CD8-positive, alpha-beta T cell (primary cell): ENCODE measurements at regions of chr12 and their contacts with region 1.

Region 1: GRCh38 chr12:95217377-95218149 is at the starts of genes FGD6 and VEZT:
- DNase-seq: peak; percentile 93 to 99 (median 98)
- ATAC-seq: peak; percentile 91
- H3K4me3 ChIP-seq: peak within 1 kb of the TSS; percentile 96
- H3K4me3 Mint-ChIP-seq: peak within 1 kb of the TSS; percentile 96
- H3K27ac ChIP-seq: peak within 1 kb of the TSS; percentile 90 to 95
- H3K27ac Mint-ChIP-seq: peak within 1 kb of the TSS; percentile 97
- H3K4me1 ChIP-seq: peaks cover 17% of the 10 kb centered on the region
- H3K4me1 Mint-ChIP-seq: peaks cover 37% of the 10 kb centered on the region
- H3K27me3 ChIP-seq: no peaks in the 10 kb centered on the region
- H3K27me3 Mint-ChIP-seq: peaks cover 5% of the 10 kb centered on the region
- CTCF ChIP-seq: peak; percentile 41
- total RNA-seq, gene FGD6: 0.94 to 1.6 TPM
- total RNA-seq, gene VEZT: 48.4 to 57.7 TPM

Region 2: DNA sequence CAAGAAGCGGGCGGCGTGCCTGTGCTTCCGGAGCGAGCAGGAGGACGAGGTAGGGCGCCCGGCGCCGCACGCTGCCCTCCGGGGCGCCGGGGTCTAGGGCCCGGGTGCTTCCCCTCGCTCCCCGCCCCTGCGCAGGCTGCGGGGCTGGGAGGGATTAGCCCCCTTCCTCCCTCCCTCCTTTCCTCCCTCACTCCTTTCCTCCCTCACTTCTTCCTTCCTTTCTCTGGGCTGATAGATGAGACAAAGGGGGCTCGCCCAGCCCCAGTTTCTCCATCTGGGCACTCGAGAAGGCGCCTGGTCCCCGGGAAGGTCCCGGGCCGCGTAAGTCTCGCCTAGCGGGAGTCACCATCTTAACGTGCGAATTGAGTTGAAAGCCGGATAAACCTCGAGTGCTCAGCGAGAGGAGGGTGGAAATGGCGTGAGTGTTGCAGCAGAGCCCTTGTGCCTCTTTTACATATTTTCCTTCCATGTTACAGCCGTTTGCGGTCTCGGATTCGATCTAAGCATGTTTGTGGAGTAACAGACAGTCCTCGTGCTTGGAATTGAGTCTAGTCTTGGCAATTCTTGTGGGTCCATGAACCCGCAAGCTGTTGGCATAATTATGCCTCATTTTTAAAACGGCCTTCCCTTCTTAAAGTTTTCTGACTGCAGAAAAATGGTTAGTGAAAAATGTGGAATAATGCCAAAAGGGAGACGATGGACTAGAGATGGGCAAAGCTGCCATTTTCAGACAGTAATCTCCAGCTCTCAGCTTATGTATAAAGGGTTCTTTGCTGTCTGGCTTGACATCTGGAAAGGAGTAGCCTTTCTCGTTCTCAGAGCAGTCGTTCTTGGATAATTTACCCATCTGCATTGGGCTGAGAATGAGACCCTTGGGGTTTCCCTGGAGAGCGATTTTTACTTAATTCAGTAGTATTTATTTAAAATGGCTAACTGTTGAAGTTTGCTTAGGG is 1838.9 kb before region 1 on chr12:
- CTCF ChIA-PET with region 1: no interaction called
- POLR2A ChIA-PET with region 1: no interaction called
- intact Hi-C with region 1: loop called in 1 of 2 experiments (anchors 2 kb)
- DNase-seq: peak; percentile 18 to 85 (median 57)
- ATAC-seq: peak; percentile 54
- H3K4me3 ChIP-seq: peak overlapping the region; percentile 72 to 87
- H3K4me3 Mint-ChIP-seq: peak overlapping the region; percentile 99
- H3K27ac ChIP-seq: peak overlapping the region; percentile 77 to 81
- H3K27ac Mint-ChIP-seq: peak overlapping the region; percentile 99
- H3K4me1 ChIP-seq: peaks cover 23% of the 10 kb centered on the region
- H3K4me1 Mint-ChIP-seq: peaks cover 44% of the 10 kb centered on the region
- H3K27me3 ChIP-seq: no peaks in the 10 kb centered on the region
- H3K27me3 Mint-ChIP-seq: no peaks in the 10 kb centered on the region
- CTCF ChIP-seq: no peak

Region 3: GRCh38 chr12:94532490-94533422 is 684.8 kb before region 1 on chr12:
- CTCF ChIA-PET with region 1: no interaction called
- POLR2A ChIA-PET with region 1: no interaction called
- intact Hi-C with region 1: loop called in 1 of 2 experiments (anchors 5 kb)
- DNase-seq: peak; percentile 47 to 79 (median 70)
- ATAC-seq: peak; percentile 79
- H3K4me3 ChIP-seq: no peak overlapping the region
- H3K4me3 Mint-ChIP-seq: no peak overlapping the region
- H3K27ac ChIP-seq: no peak overlapping the region
- H3K27ac Mint-ChIP-seq: no peak overlapping the region
- H3K4me1 ChIP-seq: no peaks in the 10 kb centered on the region
- H3K4me1 Mint-ChIP-seq: no peaks in the 10 kb centered on the region
- H3K27me3 ChIP-seq: no peaks in the 10 kb centered on the region
- H3K27me3 Mint-ChIP-seq: peaks cover 10% of the 10 kb centered on the region
- CTCF ChIP-seq: peak; percentile 75

Region 4: GRCh38 chr12:95117178-95117599 is 100.4 kb before region 1 on chr12:
- CTCF ChIA-PET with region 1: interaction called, 4 read pairs
- POLR2A ChIA-PET with region 1: no interaction called
- intact Hi-C with region 1: loop called (anchors 1 kb)
- DNase-seq: peak; percentile 21 to 78 (median 67)
- ATAC-seq: peak; percentile 83
- H3K4me3 ChIP-seq: no peak overlapping the region
- H3K4me3 Mint-ChIP-seq: no peak overlapping the region
- H3K27ac ChIP-seq: no peak overlapping the region
- H3K27ac Mint-ChIP-seq: no peak overlapping the region
- H3K4me1 ChIP-seq: no peaks in the 10 kb centered on the region
- H3K4me1 Mint-ChIP-seq: no peaks in the 10 kb centered on the region
- H3K27me3 ChIP-seq: no peaks in the 10 kb centered on the region
- H3K27me3 Mint-ChIP-seq: no peaks in the 10 kb centered on the region
- CTCF ChIP-seq: peak; percentile 75

Region 5: GRCh38 chr12:95858479-95859343 is 641.1 kb after region 1 on chr12 and contains the start of gene SNRPF:
- CTCF ChIA-PET with region 1: no interaction called
- POLR2A ChIA-PET with region 1: no interaction called
- intact Hi-C with region 1: loop called (anchors 1 to 2 kb)
- DNase-seq: peak; percentile 88 to 97 (median 92)
- ATAC-seq: peak; percentile 94
- H3K4me3 ChIP-seq: peak within 1 kb of the TSS; percentile 83 to 86
- H3K4me3 Mint-ChIP-seq: no peak within 1 kb of the TSS
- H3K27ac ChIP-seq: peak within 1 kb of the TSS; percentile 79 to 92
- H3K27ac Mint-ChIP-seq: no peak within 1 kb of the TSS
- H3K4me1 ChIP-seq: peaks cover 22% of the 10 kb centered on the region
- H3K4me1 Mint-ChIP-seq: peaks cover 21% of the 10 kb centered on the region
- H3K27me3 ChIP-seq: peaks cover 0 to 2% of the 10 kb centered on the region in 2 experiments
- H3K27me3 Mint-ChIP-seq: peaks cover 3% of the 10 kb centered on the region
- CTCF ChIP-seq: no peak
- total RNA-seq, gene SNRPF: 42.9 to 49.2 TPM

Region 6: DNA sequence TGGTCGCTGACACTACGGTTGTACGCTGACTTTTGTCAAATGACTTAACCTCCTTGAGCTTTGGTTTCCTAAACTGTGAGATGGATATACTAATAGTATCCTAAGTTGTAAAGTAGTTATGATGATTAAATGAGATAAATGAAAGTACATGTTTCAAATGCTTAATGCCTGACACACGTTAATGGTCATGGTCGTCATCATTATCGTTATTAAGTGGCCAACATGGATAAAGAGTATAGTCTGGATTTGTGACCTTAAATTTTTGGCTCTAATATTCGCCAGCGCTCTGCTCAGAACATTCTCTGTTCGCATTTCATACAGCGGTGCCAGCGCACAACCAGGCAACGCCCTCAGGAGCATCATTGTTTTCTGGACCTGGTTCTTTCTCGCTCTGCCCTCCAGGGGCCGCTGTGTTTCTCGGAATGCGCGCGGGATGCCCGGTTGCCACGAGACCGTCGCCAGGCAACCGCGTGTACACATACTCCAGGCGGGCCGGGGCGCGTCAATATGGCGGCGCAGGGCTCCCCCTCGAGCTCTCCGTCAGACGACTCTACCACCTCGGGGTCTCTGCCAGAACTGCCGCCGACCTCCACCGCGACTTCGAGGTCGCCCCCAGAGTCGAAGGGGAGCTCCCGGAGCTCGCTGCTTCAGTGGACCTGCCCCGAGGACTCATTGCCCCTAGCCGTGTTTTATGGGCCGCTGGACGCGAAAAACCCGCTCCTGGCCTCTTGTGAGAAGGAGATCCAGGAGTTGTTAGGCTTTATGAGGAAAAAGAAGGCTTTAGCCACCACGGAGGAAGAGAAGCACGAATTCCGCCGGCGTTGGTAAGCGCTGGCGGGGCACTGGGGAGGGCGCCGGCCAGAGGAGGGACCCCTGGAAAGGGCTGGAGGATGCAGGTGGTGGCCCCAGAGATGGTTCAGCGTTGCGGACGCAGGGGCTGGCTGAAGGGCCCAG is 1271.8 kb after region 1 on chr12 and contains the start of gene CFAP54:
- CTCF ChIA-PET with region 1: no interaction called
- POLR2A ChIA-PET with region 1: no interaction called
- intact Hi-C with region 1: loop called in 1 of 2 experiments (anchors 2 kb)
- DNase-seq: peak; percentile 91 to 98 (median 95)
- ATAC-seq: peak; percentile 88
- H3K4me3 ChIP-seq: peak within 1 kb of the TSS; percentile 72 to 75
- H3K4me3 Mint-ChIP-seq: peak within 1 kb of the TSS; percentile 91
- H3K27ac ChIP-seq: peak within 1 kb of the TSS; percentile 58 to 76
- H3K27ac Mint-ChIP-seq: peak within 1 kb of the TSS; percentile 82
- H3K4me1 ChIP-seq: peaks cover 23% of the 10 kb centered on the region
- H3K4me1 Mint-ChIP-seq: peaks cover 24% of the 10 kb centered on the region
- H3K27me3 ChIP-seq: no peaks in the 10 kb centered on the region
- H3K27me3 Mint-ChIP-seq: no peaks in the 10 kb centered on the region
- CTCF ChIP-seq: peak; percentile 85
- total RNA-seq, gene CFAP54: 1.0 to 1.2 TPM